ENCODE measurements at regions of chr6 and their contacts with region 1.

Region 1: GRCh38 chr6:29649701-29650673 is 6.9 kb upstream of the MOG start:
- DNase-seq: peak; percentile 99
- ATAC-seq: peak; percentile 97
- H3K4me3 Mint-ChIP-seq: peak overlapping the region; percentile 90
- H3K27ac Mint-ChIP-seq: peak overlapping the region; percentile 99
- H3K4me1 Mint-ChIP-seq: peaks cover 11% of the 10 kb centered on the region
- H3K27me3 Mint-ChIP-seq: peaks cover under 1% of the 10 kb centered on the region

Region 2: DNA sequence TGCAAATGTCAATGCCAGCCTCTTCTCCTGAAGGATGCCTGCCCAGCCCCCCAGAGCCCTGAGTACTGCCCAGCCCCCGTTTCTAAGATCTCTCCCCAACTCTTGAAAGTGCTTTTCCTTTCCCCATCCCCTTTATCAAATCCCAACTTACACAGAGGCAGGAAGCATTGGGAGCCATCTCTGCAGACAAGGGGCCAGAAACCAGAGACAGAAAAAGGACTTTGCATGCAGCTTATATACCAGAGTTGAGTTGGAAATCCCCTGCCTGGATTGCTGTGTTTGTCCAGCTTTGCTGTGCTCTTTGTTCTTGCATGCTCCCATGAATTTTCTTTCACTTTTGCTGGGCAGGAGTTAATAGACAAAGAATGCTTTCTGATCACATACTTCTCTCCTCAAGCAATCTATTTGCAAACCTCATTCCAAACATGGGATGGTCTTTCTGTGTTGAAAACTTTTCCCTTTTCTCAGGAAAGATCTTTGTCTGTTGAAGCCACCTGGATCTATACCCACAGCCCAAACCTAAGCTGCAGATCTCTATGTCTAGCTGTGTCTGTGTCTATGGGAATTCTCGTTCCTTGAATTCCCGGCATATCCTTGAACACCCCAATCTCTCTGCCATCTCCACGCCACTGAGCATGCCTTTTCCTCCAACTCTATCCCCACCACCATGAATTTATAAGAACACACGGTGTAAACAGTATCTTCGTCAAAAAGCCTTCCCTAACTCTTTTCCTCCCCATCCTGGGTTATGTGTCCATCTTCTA is 90.3 kb before region 1 on chr6 and contains the start of gene UBD:
- CTCF ChIA-PET with region 1: no interaction called
- DNase-seq: no peak
- ATAC-seq: no peak
- H3K4me3 Mint-ChIP-seq: no peak within 1 kb of the TSS
- H3K27ac Mint-ChIP-seq: no peak within 1 kb of the TSS
- H3K4me1 Mint-ChIP-seq: peaks cover 4% of the 10 kb centered on the region
- H3K27me3 Mint-ChIP-seq: peaks cover 60% of the 10 kb centered on the region
- total RNA-seq, gene UBD: 1.6 TPM in 1 of 2 experiments, not detected in the other

Region 3: DNA sequence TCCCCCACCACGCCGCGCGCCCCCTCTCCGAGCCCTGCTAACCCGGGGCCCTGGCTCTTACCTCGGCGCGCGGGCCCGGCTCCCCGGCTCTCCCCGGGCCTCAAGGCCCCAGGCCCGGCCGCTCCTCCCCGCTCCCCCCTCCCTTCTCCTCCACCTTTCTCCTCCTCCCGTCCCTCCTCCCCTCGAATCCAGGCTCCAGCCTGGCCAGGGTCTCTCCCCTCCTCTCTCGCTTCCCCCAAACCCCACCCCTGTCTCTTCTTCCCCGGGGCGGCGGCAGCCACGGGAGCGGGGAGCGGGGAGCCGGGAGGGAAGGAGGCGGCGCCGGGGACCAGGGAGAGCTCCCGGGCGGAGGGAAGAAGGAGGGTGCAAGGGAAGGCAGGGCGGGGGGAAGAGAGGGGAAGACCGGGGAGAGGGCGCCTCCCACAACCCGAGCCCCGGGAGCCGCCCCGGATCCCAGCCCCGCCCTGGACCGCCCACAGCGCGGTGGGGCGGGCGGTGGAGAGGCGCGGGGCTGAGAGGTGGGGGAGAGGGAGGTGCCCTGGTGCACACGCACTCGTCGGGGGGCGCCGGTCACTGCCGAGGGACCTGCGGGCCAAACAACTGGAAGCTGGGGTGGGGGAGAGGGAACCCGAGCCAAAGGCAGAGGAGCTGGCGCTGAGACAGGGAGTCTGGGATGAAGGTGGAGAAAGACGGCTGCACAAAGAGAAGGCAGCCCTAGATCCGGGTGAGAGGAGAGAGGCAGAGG is 17.0 kb before region 1 on chr6 and contains the start of gene GABBR1:
- CTCF ChIA-PET with region 1: interaction called, 21 read pairs
- DNase-seq: peak; percentile 71
- ATAC-seq: peak; percentile 81
- H3K4me3 Mint-ChIP-seq: peak within 1 kb of the TSS; percentile 76
- H3K27ac Mint-ChIP-seq: no peak within 1 kb of the TSS
- H3K4me1 Mint-ChIP-seq: peaks cover 29% of the 10 kb centered on the region
- H3K27me3 Mint-ChIP-seq: peaks cover 41% of the 10 kb centered on the region
- total RNA-seq, gene GABBR1: 6.0 to 8.1 TPM

Region 4: DNA sequence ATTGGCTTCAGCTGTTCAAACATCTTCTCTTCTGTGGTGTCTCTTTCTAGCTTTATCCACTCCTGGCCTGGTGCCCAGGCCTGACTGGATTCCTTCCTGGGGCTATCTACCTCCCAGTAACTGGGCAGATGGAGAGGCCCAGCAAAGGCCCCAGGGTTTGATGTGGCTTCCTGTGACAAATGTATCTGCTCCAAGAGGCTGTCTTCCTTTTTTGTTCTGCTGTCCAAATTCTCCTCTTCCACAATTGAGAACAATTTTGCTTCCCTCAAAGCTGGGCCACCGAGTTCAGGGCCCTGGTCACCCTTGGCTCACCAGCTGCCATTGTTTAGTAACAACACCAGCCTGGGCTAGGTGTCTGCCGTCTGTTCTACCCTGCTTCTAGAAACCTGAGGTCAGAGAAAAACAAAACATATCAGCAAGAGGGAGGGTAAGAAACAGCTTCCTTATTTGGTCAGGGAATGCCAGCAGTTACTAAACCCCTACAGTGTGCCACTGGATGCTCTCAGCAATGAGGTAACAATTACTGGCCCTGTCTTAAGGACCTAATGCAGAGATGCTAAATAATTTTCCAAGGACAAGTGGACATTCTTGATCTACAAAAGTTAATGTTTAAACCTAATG is 27.1 kb after region 1 on chr6:
- CTCF ChIA-PET with region 1: interaction called, 28 read pairs
- DNase-seq: no peak
- ATAC-seq: no peak
- H3K4me3 Mint-ChIP-seq: no peak overlapping the region
- H3K27ac Mint-ChIP-seq: peak overlapping the region; percentile 49
- H3K4me1 Mint-ChIP-seq: peaks cover 40% of the 10 kb centered on the region
- H3K27me3 Mint-ChIP-seq: peaks cover 2% of the 10 kb centered on the region

Region 5: DNA sequence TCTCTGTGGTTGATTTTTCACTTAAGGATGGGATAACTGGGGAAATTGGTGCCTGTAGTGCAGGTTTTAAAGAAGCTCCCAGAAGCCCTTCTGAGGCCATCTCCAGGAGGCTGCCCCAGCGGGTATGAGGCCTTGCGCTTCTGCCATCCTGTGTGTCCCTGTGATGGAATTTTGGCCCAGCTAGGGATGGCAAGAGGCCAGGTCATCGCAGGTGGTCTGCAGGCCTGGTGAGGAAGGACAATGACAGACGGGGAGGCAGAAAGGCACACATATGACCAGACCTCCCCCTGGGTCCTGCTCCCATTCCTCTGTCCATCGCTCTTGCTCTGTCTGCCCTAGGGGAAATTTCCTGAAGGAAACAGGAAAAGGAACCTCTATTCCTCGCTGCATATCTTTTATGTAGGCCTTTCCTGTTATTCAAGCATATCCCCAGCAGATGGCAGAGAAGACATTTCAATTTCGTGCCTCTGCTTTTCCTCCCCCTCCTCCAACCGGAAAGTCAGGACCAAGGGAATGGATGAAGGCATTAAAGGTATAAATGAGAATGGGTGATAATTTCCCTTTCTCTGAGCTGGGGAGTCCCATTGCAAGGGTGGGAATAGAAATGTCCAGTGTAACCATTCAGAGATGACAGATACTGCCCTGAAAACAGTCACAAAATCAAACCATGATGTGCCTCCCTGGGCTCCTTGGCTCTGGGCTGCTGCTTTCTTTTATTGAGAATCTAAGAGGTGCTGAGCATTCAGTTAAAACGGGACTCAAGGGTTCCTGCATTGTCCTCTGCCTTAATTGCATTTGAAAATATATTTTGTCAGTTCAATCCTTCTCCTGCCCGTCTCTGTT is 55.6 kb after region 1 on chr6:
- CTCF ChIA-PET with region 1: interaction called, 18 read pairs
- DNase-seq: no peak
- ATAC-seq: no peak
- H3K4me3 Mint-ChIP-seq: no peak overlapping the region
- H3K27ac Mint-ChIP-seq: no peak overlapping the region
- H3K4me1 Mint-ChIP-seq: peaks cover 44% of the 10 kb centered on the region
- H3K27me3 Mint-ChIP-seq: peaks cover 31% of the 10 kb centered on the region

Region 6: DNA sequence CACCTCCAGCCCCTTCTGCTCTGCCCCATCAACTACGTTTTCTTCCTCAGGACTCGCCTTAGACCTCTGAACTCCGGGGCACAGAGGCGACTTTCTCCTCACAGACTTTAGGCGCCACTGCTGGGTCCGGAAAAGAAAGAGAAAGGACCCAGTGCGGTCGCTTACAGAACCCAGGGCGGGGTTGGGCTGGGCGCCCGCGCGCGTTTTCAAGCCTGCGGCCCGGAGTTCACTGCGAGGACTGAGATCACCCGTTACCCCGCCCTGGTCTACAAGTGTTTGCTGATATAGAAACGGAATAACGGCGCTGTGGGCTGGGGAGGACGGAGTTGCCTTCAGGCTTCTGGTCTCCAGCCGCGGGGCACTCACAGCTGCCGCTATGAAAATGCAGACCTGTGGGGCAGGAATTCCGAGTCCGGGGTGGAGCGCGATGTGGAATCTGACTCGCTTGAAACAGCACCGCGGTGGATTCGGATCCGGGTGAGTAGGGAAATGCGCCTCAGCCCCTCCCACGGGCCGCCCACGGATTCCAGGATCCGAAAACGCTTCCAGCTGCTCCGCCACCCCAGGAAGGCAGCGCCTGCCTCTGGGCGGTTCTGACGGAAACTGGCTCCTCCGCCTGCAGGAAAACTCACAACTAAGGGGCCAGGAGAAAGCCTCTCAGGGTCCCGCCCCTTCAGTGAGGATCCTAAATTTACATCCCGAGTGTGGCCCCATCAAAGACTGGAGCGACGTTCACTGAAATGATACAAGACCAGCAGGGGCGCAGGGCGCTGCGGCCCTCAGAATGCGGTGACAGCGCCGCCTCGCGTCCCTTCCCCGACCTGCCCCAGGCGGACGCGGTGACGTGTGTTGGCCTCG is 102.7 kb after region 1 on chr6:
- CTCF ChIA-PET with region 1: interaction called, 71 read pairs
- DNase-seq: peak; percentile 91
- ATAC-seq: peak; percentile 70
- H3K4me3 Mint-ChIP-seq: peak overlapping the region; percentile 85
- H3K27ac Mint-ChIP-seq: peak overlapping the region; percentile 94
- H3K4me1 Mint-ChIP-seq: peaks cover 48% of the 10 kb centered on the region
- H3K27me3 Mint-ChIP-seq: no peaks in the 10 kb centered on the region

Measured in activated CD8-positive, alpha-beta memory T cell treated with anti-CD3 and anti-CD28 coated beads, Interleukin-2, amount 10 ng/mL, durations not matched to agents 7 days and 5 days (primary cell).